Common myeloid progenitor, CD34-positive (primary cell): ENCODE measurements at regions of chr22 and their contacts with region 1.

Region 1: GRCh38 chr22:50085211-50085972 is at the start of gene MLC1:
- DNase-seq: peak; percentile 70 to 93 (median 91)
- H3K4me3 ChIP-seq: peak within 1 kb of the TSS in 1 of 7 experiments; percentile 27
- H3K27ac ChIP-seq: no peak within 1 kb of the TSS
- H3K4me1 ChIP-seq: peaks cover 0 to 37% (median 34%) of the 10 kb centered on the region in 4 experiments
- H3K27me3 ChIP-seq: no peaks in the 10 kb centered on the region

Region 2: DNA sequence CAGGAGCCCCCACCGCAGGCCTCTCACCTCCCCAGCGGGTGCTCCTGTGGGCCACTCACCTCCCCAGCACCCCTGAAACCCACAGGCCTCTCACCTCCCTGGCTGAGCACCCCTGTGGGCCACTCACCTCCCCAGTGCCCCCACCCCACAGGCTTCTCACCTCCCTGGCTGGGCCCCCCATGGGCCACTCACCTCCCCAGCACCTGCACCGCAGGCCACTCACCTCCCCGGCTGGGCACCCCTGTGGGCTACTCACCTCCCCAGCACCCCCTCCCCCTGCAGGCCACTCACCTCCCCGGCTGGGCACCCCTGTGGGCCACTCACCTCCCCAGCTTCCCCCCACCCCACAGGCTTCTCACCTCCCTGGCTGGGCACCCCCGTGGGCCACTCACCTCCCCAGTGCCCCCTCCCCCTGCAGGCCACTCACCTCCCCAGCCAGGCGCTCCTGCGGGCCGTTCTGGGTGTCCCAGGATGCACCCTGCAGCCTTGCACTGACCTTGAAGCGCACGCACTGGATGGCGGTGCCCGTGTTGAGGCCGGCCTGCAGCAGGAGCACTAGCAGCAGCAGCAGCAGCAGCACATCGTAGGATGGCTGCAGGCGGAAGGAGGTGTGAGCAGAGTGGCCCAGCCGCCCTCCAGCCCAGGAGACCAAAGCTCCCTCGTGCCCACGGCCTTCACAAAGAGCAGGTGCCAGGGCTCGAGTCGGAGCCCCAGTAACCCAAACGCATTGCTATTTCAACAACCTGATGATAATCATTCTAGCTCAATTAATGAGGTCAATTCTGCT is 21.6 kb before region 1 on chr22:
- CTCF ChIA-PET with region 1: interaction called, 14 read pairs
- POLR2A ChIA-PET with region 1: interaction called, 3 read pairs
- DNase-seq: no peak
- H3K4me3 ChIP-seq: no peak overlapping the region
- H3K27ac ChIP-seq: no peak overlapping the region
- H3K4me1 ChIP-seq: peaks cover 0 to 38% (median 22%) of the 10 kb centered on the region in 4 experiments
- H3K27me3 ChIP-seq: peaks cover 0 to 11% (median 0%) of the 10 kb centered on the region in 5 experiments

Region 3: GRCh38 chr22:50071432-50072166 is 13.8 kb before region 1 on chr22:
- CTCF ChIA-PET with region 1: interaction called, 14 read pairs
- POLR2A ChIA-PET with region 1: interaction called, 3 read pairs
- DNase-seq: no peak
- H3K4me3 ChIP-seq: no peak overlapping the region
- H3K27ac ChIP-seq: no peak overlapping the region
- H3K4me1 ChIP-seq: no peaks in the 10 kb centered on the region
- H3K27me3 ChIP-seq: no peaks in the 10 kb centered on the region

Region 4: GRCh38 chr22:50105208-50106100 is 20.1 kb after region 1 on chr22:
- CTCF ChIA-PET with region 1: interaction called, 9 read pairs
- POLR2A ChIA-PET with region 1: interaction called, 10 read pairs
- DNase-seq: peak; percentile 62 to 92 (median 86)
- H3K4me3 ChIP-seq: peak overlapping the region in 5 of 7 experiments; percentile 24 to 75 (median 46)
- H3K27ac ChIP-seq: no peak overlapping the region
- H3K4me1 ChIP-seq: peaks cover 6 to 45% (median 22%) of the 10 kb centered on the region in 4 experiments
- H3K27me3 ChIP-seq: no peaks in the 10 kb centered on the region

Region 5: GRCh38 chr22:50112151-50113118 is 27.0 kb after region 1 on chr22:
- CTCF ChIA-PET with region 1: interaction called, 11 read pairs
- POLR2A ChIA-PET with region 1: interaction called, 10 read pairs
- DNase-seq: peak; percentile 55 to 85 (median 78)
- H3K4me3 ChIP-seq: peak overlapping the region in 4 of 7 experiments; percentile 28 to 66 (median 46)
- H3K27ac ChIP-seq: peak overlapping the region; percentile 66 to 83
- H3K4me1 ChIP-seq: peaks cover 2 to 30% (median 25%) of the 10 kb centered on the region in 4 experiments
- H3K27me3 ChIP-seq: no peaks in the 10 kb centered on the region